ENCODE measurements at regions of chr15 and their contacts with region 1.

Region 1: DNA sequence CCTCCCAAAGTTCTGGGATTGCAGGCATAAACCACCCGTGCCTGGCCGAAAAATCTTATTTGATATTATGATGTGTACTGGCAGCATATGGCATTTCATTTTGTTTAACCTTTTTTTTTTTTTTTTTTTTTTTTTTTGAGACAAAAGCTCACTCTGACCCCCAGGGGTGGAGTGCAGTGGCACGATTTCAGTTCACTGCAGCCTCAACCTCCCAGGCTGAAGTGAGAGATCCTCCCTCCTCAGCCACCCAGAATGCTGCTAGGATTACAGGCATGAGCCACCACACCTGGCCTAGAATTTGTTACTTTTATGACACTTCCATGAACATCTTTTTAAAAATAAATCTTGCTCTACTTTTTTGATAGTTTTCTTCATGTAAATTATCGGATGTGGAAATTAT is 12.0 kb downstream of the TERB2 start:
- DNase-seq: no peak
- H3K4me3 Mint-ChIP-seq: no peak overlapping the region
- H3K27ac Mint-ChIP-seq: no peak overlapping the region
- H3K4me1 Mint-ChIP-seq: no peaks in the 10 kb centered on the region
- H3K27me3 Mint-ChIP-seq: no peaks in the 10 kb centered on the region

Region 2: GRCh38 chr15:44623178-44623577 is 345.3 kb before region 1 on chr15:
- CTCF ChIA-PET with region 1: no interaction called
- intact Hi-C with region 1: no loop called
- DNase-seq: no peak
- H3K4me3 Mint-ChIP-seq: no peak overlapping the region
- H3K27ac Mint-ChIP-seq: no peak overlapping the region
- H3K4me1 Mint-ChIP-seq: peaks cover 14% of the 10 kb centered on the region
- H3K27me3 Mint-ChIP-seq: no peaks in the 10 kb centered on the region

Region 3: GRCh38 chr15:45030743-45031142 is 62.3 kb after region 1 on chr15:
- CTCF ChIA-PET with region 1: interaction called, 10 read pairs
- intact Hi-C with region 1: no loop called
- DNase-seq: no peak
- H3K4me3 Mint-ChIP-seq: no peak overlapping the region
- H3K27ac Mint-ChIP-seq: no peak overlapping the region
- H3K4me1 Mint-ChIP-seq: peaks cover 6% of the 10 kb centered on the region
- H3K27me3 Mint-ChIP-seq: no peaks in the 10 kb centered on the region

Region 4: DNA sequence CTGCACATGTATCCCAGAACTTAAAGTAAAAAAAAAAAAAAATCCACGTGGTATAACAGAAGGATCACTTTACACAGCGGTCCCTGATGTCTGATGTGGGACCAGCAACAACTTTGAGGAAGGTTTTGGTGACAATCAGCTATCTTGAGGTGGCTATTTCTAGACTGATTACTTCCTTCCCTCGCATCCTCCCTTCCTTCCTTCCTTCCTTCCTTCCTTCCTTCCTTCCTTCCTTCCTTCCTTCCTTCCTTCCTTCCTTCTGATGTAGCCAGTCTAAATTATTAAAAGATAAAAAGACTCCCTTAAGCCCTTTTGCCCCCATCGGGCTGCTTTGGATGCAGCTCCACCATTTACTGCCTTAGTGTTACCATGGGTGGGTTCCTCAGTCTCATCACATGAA is 69.5 kb after region 1 on chr15:
- CTCF ChIA-PET with region 1: interaction called, 10 read pairs
- intact Hi-C with region 1: loop called (anchors 2 kb)
- DNase-seq: no peak
- H3K4me3 Mint-ChIP-seq: no peak overlapping the region
- H3K27ac Mint-ChIP-seq: no peak overlapping the region
- H3K4me1 Mint-ChIP-seq: peaks cover 17% of the 10 kb centered on the region
- H3K27me3 Mint-ChIP-seq: no peaks in the 10 kb centered on the region